GM23248 (cell line): ENCODE measurements at regions of chr20 and their contacts with region 1.

Region 1: GRCh38 chr20:19661717-19662636 is 96.1 kb upstream of the RIN2 start:
- DNase-seq: peak; percentile 81
- H3K4me3 ChIP-seq: no peak overlapping the region
- H3K27ac ChIP-seq: no peak overlapping the region
- H3K4me1 ChIP-seq: no peaks in the 10 kb centered on the region
- H3K27me3 ChIP-seq: peaks cover 43% of the 10 kb centered on the region

Region 2: DNA sequence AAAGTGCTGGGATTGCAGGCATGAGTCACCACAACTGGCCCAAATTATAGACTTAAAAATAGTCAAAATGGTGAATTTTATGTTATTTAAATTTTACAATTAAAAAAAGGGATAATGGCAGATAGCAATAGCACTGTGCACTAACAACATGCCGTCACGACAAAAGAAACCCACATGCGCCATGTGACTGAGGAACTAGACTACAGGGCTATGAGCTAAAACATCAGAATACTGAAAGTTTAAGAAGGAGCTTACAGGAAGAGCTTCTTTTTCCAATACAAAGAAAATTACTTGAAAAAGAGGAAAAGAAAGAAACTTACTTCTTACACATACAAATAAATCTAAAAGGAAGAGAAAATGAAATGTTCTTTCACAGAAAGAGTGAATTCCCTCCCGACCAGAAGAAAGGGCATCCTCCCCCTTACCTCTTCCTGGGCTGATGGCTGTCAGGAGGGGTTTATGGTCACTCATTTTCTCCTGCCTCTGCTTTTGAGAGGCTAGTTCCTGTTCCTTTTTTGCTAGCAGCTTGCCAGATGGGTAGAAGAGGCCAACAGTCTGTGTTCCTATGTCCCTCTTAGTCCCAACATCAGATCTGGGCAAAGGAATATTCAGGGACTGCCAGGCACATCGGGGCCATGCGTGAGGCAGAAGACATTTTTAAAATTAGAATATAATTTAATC is 1249.6 kb before region 1 on chr20:
- in situ Hi-C with region 1: loop called (anchors 25 kb)
- DNase-seq: no peak
- H3K4me3 ChIP-seq: no peak overlapping the region
- H3K27ac ChIP-seq: no peak overlapping the region
- H3K4me1 ChIP-seq: no peaks in the 10 kb centered on the region
- H3K27me3 ChIP-seq: no peaks in the 10 kb centered on the region

Region 3: DNA sequence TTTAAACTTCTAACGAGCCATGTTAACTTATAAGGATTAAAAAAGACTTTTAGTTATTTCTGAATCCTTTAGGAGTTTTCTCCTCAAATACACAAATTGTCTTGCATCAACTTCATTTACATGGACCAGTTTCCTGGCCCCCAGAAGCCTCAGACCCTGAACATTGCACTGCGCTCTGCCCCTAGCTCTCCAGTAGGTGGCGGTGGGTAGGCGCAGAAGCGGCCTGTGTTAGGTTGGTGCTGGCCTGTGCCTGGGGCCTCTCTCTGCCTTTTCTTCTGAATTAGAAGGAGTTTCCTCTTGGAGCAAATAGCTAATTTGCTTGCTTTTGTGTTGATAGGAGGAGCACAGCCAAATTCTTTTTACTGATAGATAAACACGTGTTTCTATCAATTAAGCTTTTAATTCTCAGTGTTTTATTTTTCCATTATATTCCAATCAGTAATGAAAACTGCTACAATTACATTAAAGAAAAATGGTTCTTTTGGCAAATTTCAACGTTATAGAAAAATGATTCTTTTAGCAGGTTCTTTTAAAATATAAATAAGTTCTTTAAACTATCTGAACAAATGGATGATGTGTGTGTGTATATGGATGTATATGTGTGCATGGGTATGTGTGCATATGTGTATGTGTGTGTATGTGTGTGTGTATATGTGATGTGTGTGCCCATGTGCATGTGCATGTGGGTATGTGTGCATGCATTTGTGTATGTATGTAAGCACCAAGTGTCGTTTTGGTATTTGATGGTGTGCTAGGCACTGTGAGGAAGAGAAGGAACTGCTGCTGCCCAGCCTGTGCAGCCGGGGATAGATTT is 1029.6 kb before region 1 on chr20:
- in situ Hi-C with region 1: loop called (anchors 25 kb)
- DNase-seq: peak; percentile 79
- H3K4me3 ChIP-seq: no peak overlapping the region
- H3K27ac ChIP-seq: no peak overlapping the region
- H3K4me1 ChIP-seq: no peaks in the 10 kb centered on the region
- H3K27me3 ChIP-seq: no peaks in the 10 kb centered on the region

Region 4: DNA sequence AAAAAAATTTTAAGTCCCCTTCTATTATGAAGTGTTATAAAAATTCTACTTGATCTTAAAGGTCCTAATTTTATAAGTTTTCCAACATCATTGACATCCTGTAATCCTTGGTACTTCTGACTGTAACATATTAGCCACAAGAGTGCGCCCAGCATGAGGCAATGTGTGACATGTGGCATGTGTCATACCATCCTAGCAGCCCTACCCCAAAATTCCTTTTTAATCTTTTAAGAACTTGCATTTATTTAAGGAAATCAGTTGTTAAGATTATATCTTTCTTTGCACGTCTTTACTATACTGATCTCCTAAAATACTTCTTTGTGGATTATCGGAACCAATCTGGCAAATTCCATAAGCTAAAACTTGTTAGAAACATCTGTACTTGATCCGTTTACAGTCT is 616.6 kb before region 1 on chr20:
- in situ Hi-C with region 1: no loop called
- DNase-seq: no peak
- H3K4me3 ChIP-seq: no peak overlapping the region
- H3K27ac ChIP-seq: no peak overlapping the region
- H3K4me1 ChIP-seq: no peaks in the 10 kb centered on the region
- H3K27me3 ChIP-seq: no peaks in the 10 kb centered on the region; the same call in 1 of the 2 replicates

Region 5: GRCh38 chr20:19205977-19206396 is 456.0 kb before region 1 on chr20:
- in situ Hi-C with region 1: loop called (anchors 10 kb)
- DNase-seq: peak; percentile 63
- H3K4me3 ChIP-seq: no peak overlapping the region
- H3K27ac ChIP-seq: no peak overlapping the region
- H3K4me1 ChIP-seq: no peaks in the 10 kb centered on the region
- H3K27me3 ChIP-seq: peaks cover 13% of the 10 kb centered on the region

Region 6: GRCh38 chr20:19725814-19726525 is 64.0 kb after region 1 on chr20:
- in situ Hi-C with region 1: no loop called
- DNase-seq: peak; percentile 60
- H3K4me3 ChIP-seq: no peak overlapping the region
- H3K27ac ChIP-seq: no peak overlapping the region
- H3K4me1 ChIP-seq: peaks cover 14% of the 10 kb centered on the region
- H3K27me3 ChIP-seq: no peaks in the 10 kb centered on the region